Right ventricle myocardium superior (tissue), 1 donor: ENCODE measurements at regions of chr1 and their contacts with region 1.

Region 1: DNA sequence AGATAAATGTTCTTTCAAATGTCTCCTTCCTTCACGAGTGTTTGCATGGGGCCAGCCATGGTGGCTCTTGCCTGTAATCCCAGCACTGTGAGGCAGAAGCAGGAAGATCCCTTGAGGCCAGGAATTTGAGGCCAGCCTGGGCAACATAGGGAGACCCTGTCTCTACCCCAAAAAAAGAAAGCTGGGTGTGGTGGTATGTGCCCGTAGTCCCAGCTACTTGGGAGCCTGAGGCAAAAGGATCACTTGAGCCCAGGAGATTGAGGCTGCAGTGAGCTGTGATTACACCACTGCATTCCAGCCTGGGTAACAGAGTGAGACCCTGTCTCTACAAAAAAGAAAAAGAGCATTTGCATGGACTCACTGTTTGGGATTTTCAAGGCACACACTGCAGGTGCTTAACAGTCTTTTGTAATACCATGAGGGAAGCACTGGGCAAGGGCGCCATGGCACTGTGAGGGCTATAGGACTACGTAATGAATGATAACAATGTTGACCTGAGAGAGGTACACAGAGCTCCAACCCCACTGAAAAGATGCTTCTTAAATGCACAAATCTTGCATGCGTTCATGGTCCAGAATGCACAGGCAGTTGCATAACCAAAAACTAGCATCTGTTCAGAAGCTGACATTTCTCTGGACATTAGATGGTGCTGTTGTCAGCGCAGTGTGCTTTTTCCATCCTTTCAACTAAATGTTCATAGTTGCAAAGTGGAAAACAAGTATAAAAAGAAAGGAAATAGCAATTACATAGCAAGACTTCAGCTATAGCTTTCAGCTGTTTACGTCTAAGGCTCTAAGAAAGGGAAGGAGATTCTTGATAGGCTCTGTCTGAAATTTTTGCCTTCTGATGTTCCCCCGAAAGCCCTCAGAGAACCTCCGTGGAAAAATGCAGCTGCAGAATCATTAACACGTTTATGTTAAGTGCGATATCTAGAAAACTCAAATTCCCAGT is 7.8 kb upstream of the TARBP1 start:
- DNase-seq: no peak
- ATAC-seq: peak; percentile 90

Region 2: GRCh38 chr1:235423191-235423652 is 936.4 kb after region 1 on chr1:
- intact Hi-C with region 1: loop called (anchors 5 kb)
- DNase-seq: no peak
- ATAC-seq: no peak